ENCODE measurements at regions of chr6 and their contacts with region 1.

Region 1: GRCh38 chr6:43506667-43507471 is 3.3 kb downstream of the LRRC73 start:
- DNase-seq: peak; percentile 61 to 78
- H3K4me3 ChIP-seq: no peak overlapping the region
- H3K27ac ChIP-seq: peak overlapping the region in 1 of 2 donors; percentile 40
- H3K4me1 ChIP-seq: no peaks in the 10 kb centered on the region
- H3K27me3 ChIP-seq: no peaks in the 10 kb centered on the region
- CTCF ChIP-seq: peak; percentile 84 to 96 (median 92)
- POLR2A ChIP-seq: no peak

Region 2: GRCh38 chr6:43369174-43370022 is 137.5 kb before region 1 on chr6 and contains the start of gene ZNF318:
- intact Hi-C with region 1: loop called (anchors 10 kb)
- DNase-seq: peak; percentile 93 to 95
- H3K4me3 ChIP-seq: peak within 1 kb of the TSS; percentile 67 to 93 (median 83)
- H3K27ac ChIP-seq: peak within 1 kb of the TSS; percentile 81 to 83
- H3K4me1 ChIP-seq: no peaks in the 10 kb centered on the region
- H3K27me3 ChIP-seq: no peaks in the 10 kb centered on the region
- CTCF ChIP-seq: no peak
- POLR2A ChIP-seq: peak; percentile 26
- total RNA-seq, gene ZNF318: 15.4 to 19.5 (median 17.4) TPM

Region 3: GRCh38 chr6:43454696-43455530 is 52.0 kb before region 1 on chr6:
- intact Hi-C with region 1: loop called (anchors 10 kb)
- DNase-seq: no peak
- H3K4me3 ChIP-seq: peak overlapping the region; percentile 39 to 84 (median 59)
- H3K27ac ChIP-seq: peak overlapping the region; percentile 46 to 61
- H3K4me1 ChIP-seq: no peaks in the 10 kb centered on the region
- H3K27me3 ChIP-seq: peaks cover 0 to 2% of the 10 kb centered on the region in 2 donors
- CTCF ChIP-seq: no peak
- POLR2A ChIP-seq: no peak